Right ventricle myocardium inferior (tissue), 1 donor: ENCODE measurements at regions of chr11 and their contacts with region 1.

Region 1: DNA sequence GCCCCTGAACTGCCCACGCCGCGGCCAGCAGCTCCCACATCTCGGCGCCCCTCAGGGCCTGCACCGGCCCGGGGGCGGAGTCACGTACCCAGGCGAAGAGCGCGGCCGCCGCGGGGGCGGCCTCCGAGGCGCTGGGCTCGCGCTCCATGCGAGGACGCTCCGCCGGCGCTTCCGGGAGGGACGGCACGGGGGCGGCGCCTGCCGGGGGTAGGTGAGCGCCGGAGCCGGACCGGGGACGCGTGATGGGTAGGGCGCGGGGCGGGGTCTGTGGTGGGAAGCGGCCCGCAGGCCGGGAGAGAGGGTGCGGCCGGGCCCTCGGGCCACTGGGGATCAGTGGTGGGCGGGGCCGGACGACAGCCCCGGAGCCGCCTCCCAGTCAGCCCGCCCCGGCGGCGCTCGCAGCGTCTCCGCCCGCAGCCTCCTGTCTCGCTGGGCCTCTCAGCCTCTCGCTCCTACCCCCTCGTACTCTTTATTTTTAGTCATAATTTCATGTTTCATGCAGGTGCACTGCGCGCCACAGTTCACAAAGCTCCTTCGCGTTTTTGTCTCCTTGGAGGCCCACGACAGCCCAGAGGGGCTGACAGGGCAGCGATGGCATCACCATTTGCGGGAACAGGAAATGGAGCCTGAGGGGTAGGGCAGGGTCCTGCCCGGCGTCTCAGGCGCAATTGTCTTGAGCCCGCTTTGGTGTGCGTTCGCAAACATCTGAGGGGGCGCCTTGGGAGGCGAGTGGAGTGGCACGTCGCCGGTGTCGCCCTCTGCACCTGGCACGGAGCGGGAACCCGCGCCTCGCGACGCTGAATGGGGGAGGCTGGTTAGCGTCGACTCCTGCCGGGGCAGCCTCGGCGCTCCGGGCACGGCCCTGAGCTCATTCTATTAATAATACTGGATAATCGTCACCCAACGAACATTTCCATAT is at the start of gene SERGEF:
- DNase-seq: peak; percentile 97
- ATAC-seq: peak; percentile 98
- total RNA-seq, gene SERGEF: 15.2 TPM

Region 2: DNA sequence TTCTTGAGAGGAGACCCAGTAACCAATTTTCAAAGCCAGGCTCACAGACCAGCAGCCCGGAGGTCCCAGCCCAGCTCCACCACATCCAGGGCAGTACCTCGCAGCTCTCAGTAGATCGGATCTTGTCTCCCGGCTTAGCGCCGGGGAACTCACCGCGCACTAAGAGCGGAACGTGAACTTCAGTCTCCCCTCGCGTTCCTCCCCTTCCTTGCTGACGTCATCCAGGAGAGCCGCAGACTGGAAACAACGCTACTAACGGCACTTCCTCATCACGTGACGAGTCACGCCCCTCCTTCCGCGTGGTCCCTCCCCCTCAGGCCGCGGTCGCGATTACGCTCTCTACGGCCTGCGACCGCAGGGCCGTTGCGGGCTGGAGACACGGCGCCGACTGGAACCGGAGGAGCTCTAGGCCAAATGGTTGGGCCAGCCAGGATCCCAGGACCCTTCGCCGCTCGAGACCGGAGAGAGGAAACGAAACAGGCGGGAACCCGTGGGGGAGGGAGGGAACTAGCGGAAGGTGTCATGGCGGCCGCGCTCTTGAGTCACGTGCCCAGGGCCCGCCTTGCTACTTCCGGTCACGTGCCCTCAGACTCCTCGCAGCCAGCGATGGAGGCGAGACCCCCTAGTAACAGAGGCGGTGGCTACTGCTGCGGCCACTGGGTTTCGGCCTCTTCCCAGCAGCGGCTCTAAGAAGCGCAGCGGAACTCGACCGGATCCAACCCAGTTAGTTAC is 309.0 kb after region 1 on chr11 and contains the starts of genes GTF2H1 and HPS5:
- intact Hi-C with region 1: loop called (anchors 5 kb)
- DNase-seq: peak; percentile 96
- ATAC-seq: peak; percentile 99
- total RNA-seq, gene GTF2H1: 23.9 TPM
- total RNA-seq, gene HPS5: 10.5 TPM